Left ventricle myocardium inferior (tissue), 1 donor: ENCODE measurements at regions of chr18 and their contacts with region 1.

Region 1: GRCh38 chr18:2906704-2907549 is 60.1 kb downstream of the EMILIN2 start:
- DNase-seq: no peak
- H3K4me3 ChIP-seq: peak overlapping the region; percentile 76
- H3K27ac ChIP-seq: peak overlapping the region; percentile 73
- H3K4me1 ChIP-seq: peaks cover 59% of the 10 kb centered on the region
- H3K27me3 ChIP-seq: no peaks in the 10 kb centered on the region
- CTCF ChIP-seq: peak; percentile 43

Region 2: DNA sequence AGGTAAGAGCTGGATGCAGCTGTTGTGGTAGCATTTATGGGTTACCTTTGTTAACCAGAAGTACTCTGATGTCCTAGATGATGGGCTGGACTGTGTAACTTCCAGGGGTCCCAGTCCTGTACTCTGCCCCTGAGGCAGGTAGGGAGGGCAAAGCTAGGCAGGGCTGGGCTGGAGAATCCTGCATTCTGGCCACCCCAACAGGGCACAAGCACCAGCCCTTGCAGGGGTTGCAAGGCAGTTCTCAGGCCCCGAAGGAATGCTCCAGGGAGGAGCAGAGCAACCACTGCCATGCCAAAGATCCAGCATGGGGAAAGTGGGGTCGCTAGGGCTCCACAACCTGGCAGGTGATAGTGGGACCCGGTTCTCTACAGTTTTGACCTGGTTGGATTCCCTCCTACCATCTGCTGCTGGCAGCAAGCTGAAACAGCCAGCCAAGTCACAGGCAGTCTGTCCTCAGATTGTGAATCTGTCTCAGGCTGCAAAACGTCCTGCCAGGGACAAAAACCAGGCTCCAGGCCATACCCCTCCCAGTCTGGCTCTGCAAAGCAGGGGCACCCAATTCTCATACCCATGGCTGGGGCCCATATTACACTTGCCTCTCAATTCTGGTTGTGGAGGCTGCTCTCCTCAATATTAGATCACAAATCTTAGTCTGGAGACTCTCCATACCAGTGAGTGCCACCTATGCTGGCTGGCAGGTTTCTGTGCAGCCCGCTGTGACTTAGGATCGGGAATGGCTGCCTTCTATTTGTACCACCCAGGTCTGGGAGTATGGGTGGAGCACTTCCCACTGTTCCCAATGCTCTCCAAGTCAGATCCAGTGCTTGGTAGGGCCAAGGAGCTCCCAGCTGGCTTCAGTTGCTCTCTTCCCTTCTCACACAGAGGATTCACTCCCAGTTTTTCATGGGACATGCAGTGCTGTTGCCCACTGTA is 190.3 kb before region 1 on chr18:
- intact Hi-C with region 1: no loop called
- DNase-seq: peak; percentile 50
- H3K4me3 ChIP-seq: peak overlapping the region; percentile 25
- H3K27ac ChIP-seq: peak overlapping the region; percentile 81
- H3K4me1 ChIP-seq: peaks cover 49% of the 10 kb centered on the region
- H3K27me3 ChIP-seq: no peaks in the 10 kb centered on the region
- CTCF ChIP-seq: no peak

Region 3: DNA sequence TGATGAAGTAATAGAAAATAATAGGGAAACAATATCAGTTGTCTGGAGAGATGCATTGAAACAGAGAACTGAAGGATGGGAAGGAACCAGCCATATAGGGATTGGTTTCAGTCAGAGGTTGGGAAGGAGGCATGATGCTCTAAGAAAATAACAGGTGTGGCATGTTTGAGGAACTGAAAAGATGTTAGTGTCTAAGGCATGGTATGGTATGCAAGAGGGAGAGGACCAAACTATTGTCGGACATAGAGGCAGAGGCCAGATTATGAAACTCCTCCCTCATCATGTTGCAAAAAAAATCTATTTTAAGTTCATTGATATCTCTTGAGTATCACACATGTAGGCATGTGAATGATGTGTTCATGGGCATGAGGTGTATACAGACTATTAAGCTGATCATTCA is 109.0 kb before region 1 on chr18:
- intact Hi-C with region 1: loop called (anchors 10 kb)
- DNase-seq: no peak
- H3K4me3 ChIP-seq: no peak overlapping the region
- H3K27ac ChIP-seq: no peak overlapping the region
- H3K4me1 ChIP-seq: no peaks in the 10 kb centered on the region
- H3K27me3 ChIP-seq: no peaks in the 10 kb centered on the region
- CTCF ChIP-seq: no peak

Region 4: DNA sequence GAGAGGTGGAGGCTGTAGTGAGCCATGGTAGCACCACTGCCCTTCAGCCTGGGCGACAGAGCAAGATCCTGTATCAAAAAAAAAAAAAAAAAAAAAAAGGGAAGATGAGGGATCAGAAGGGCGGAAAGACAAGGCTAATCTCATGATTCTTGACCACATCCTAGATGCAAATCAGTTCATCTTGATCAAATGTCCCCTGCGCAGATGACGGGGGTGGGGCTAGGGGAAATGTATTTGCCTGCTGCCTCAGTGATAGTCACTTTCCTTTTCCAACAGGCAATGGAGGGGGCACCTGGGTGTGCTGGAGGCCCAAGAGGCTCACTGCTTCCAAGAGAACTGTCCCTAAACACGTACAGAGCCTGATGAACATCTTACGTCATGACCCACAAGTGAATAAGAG is 63.8 kb before region 1 on chr18:
- intact Hi-C with region 1: no loop called
- DNase-seq: no peak
- H3K4me3 ChIP-seq: no peak overlapping the region
- H3K27ac ChIP-seq: no peak overlapping the region
- H3K4me1 ChIP-seq: peaks cover 22% of the 10 kb centered on the region
- H3K27me3 ChIP-seq: peaks cover 45% of the 10 kb centered on the region
- CTCF ChIP-seq: no peak

Region 5: GRCh38 chr18:2857491-2858131 is 49.3 kb before region 1 on chr18:
- intact Hi-C with region 1: no loop called
- DNase-seq: peak; percentile 85
- H3K4me3 ChIP-seq: peak overlapping the region; percentile 29
- H3K27ac ChIP-seq: peak overlapping the region; percentile 87
- H3K4me1 ChIP-seq: peaks cover 36% of the 10 kb centered on the region
- H3K27me3 ChIP-seq: no peaks in the 10 kb centered on the region
- CTCF ChIP-seq: no peak

Region 6: DNA sequence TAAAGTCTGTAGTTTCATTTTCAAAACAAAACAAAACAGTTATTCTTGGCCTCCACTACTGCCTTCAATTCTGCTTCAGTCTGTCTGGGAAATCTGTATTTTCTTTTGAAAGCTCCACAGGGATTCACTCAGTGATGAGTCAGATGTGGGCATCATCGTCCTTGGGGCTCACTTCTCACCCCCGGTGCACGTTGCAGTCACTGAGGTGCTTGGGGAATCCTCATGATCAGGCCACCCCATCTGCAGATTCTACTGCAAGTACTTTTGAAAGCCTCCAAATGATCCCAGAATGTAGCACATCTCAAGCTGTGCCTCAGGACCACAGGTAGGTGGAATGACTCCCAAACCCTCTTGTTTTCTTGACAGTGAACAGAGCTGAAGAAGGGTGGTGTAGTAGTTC is 71.7 kb after region 1 on chr18:
- intact Hi-C with region 1: no loop called
- DNase-seq: no peak
- H3K4me3 ChIP-seq: peak overlapping the region; percentile 9
- H3K27ac ChIP-seq: peak overlapping the region; percentile 44
- H3K4me1 ChIP-seq: peaks cover 87% of the 10 kb centered on the region
- H3K27me3 ChIP-seq: no peaks in the 10 kb centered on the region
- CTCF ChIP-seq: no peak